Gastrocnemius medialis (tissue), 4 donors: ENCODE measurements at regions of chr12 and their contacts with region 1.

Region 1: GRCh38 chr12:46382964-46383653 is 10.5 kb upstream of the SLC38A2 start:
- DNase-seq: peak; percentile 96
- ATAC-seq: peak; percentile 77 to 80
- H3K4me3 ChIP-seq: peak overlapping the region; percentile 66 to 79 (median 74)
- H3K27ac ChIP-seq: peak overlapping the region; percentile 92 to 98 (median 96)
- H3K4me1 ChIP-seq: peaks cover 40 to 43% of the 10 kb centered on the region in 2 donors
- H3K27me3 ChIP-seq: no peaks in the 10 kb centered on the region
- CTCF ChIP-seq: peak in 3 of 5 experiments; percentile 23 to 53 (median 32)
- POLR2A ChIP-seq: peak; percentile 89 to 93

Region 2: GRCh38 chr12:45532113-45532512 is 851.0 kb before region 1 on chr12:
- in situ Hi-C with region 1: no loop called
- intact Hi-C with region 1: no loop called
- DNase-seq: no peak
- ATAC-seq: no peak
- H3K4me3 ChIP-seq: no peak overlapping the region
- H3K27ac ChIP-seq: no peak overlapping the region
- H3K4me1 ChIP-seq: no peaks in the 10 kb centered on the region
- H3K27me3 ChIP-seq: no peaks in the 10 kb centered on the region
- CTCF ChIP-seq: no peak
- POLR2A ChIP-seq: no peak

Region 3: DNA sequence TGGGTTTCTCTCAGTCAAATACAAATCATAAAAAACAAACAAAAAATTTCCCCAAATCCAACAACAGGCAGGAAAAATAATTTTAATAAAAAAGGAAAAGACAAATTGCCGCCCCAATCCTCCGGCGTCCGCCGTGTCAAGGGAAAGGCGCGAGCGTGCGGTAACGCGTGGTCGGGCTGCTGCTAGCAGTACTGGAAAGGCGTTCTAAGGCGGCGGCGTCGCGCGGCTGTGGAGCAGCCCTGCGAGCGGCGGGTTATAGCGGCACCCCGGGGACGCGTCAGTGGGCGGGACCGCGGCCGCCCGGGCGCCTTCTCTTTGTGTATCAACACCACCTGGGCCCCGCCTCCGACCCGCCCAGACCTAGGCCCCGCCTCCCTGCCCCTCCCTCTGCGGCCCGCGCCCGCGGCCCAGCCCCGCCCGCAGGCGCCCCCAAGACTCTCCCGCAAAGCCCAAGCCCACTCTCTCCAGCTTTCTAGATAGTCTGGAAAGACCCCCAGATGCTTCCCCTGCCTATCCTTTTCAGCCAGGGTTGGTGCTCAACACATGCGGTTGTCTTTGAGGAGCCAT is 10.5 kb before region 1 on chr12 and contains the start of gene SLC38A2:
- in situ Hi-C with region 1: no loop called
- intact Hi-C with region 1: loop called (anchors 1 kb)
- DNase-seq: peak; percentile 97 to 98
- ATAC-seq: peak; percentile 69 to 71
- H3K4me3 ChIP-seq: peak within 1 kb of the TSS; percentile 68 to 87 (median 80)
- H3K27ac ChIP-seq: peak within 1 kb of the TSS; percentile 93 to 97 (median 95)
- H3K4me1 ChIP-seq: peaks cover 38 to 46% of the 10 kb centered on the region in 2 donors
- H3K27me3 ChIP-seq: no peaks in the 10 kb centered on the region
- CTCF ChIP-seq: no peak
- POLR2A ChIP-seq: peak; percentile 100
- total RNA-seq, gene SLC38A2: 260 to 853 (median 400) TPM

Region 4: GRCh38 chr12:46430340-46430948 is 47.3 kb after region 1 on chr12:
- in situ Hi-C with region 1: no loop called
- intact Hi-C with region 1: loop called (anchors 1 kb)
- DNase-seq: no peak
- ATAC-seq: peak; percentile 83 to 95
- H3K4me3 ChIP-seq: no peak overlapping the region
- H3K27ac ChIP-seq: peak overlapping the region; percentile 3 to 65 (median 43)
- H3K4me1 ChIP-seq: peaks cover 14 to 30% of the 10 kb centered on the region in 2 donors
- H3K27me3 ChIP-seq: no peaks in the 10 kb centered on the region
- CTCF ChIP-seq: no peak
- POLR2A ChIP-seq: no peak

Region 5: DNA sequence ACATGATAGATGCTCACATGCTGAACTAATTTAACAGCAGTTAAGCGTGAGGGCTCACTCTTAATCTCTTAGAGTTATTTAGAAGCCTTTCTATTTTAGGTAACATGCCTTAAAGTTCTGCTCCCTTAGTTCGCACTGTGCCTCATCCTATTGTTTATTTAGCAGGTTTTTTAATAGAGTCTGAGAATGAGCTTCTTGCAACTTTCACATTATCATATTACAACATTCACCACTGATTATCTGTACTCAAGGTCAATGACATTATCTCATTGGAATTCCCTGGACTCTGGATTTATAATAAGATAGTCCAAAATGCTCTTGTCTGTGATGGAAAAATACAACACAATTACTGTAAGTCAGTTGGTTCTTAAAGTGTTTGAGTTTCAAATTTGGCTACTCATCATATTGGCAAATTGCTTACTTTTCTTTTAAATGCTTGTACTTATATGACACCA is 173.0 kb after region 1 on chr12:
- in situ Hi-C with region 1: loop called in 2 of 4 experiments (anchors 10 to 25 kb)
- intact Hi-C with region 1: no loop called
- DNase-seq: peak in 1 of 2 donors; percentile 40
- ATAC-seq: peak; percentile 43 to 89
- H3K4me3 ChIP-seq: peak overlapping the region in 1 of 4 donors; percentile 0
- H3K27ac ChIP-seq: peak overlapping the region; percentile 68 to 90 (median 80)
- H3K4me1 ChIP-seq: peaks cover 72 to 82% of the 10 kb centered on the region in 2 donors
- H3K27me3 ChIP-seq: no peaks in the 10 kb centered on the region
- CTCF ChIP-seq: no peak
- POLR2A ChIP-seq: peak in 1 of 2 donors; percentile 34

Region 6: GRCh38 chr12:46562625-46563228 is 179.6 kb after region 1 on chr12:
- in situ Hi-C with region 1: loop called in 2 of 4 experiments (anchors 10 to 25 kb)
- intact Hi-C with region 1: no loop called
- DNase-seq: no peak
- ATAC-seq: peak; percentile 62 to 67
- H3K4me3 ChIP-seq: peak overlapping the region in 2 of 4 donors; percentile 3 to 12
- H3K27ac ChIP-seq: peak overlapping the region; percentile 68 to 90 (median 80)
- H3K4me1 ChIP-seq: peaks cover 40 to 47% of the 10 kb centered on the region in 2 donors
- H3K27me3 ChIP-seq: no peaks in the 10 kb centered on the region
- CTCF ChIP-seq: no peak
- POLR2A ChIP-seq: no peak

Region 7: DNA sequence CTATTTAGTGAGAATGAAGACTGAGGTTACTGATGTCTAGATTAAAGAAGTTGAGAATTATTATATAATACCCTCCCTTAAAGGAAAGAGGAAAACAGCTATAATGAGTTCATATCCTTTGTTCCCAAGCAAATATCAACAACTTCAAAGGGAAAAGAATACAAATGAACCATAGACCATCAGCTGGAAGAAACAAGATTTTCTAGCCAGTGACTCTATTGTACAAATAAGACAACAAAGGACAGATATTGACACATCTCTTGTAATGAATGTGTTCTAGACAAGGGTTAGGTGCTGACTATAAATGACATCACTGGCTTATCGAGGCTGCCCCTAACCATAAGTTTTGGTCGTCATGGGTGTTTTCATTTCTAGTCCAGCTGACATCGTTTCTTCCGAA is 394.5 kb after region 1 on chr12:
- in situ Hi-C with region 1: no loop called
- intact Hi-C with region 1: loop called (anchors 5 kb)
- DNase-seq: no peak
- ATAC-seq: no peak
- H3K4me3 ChIP-seq: no peak overlapping the region
- H3K27ac ChIP-seq: peak overlapping the region; percentile 85 to 90 (median 88)
- H3K4me1 ChIP-seq: peaks cover 38 to 53% of the 10 kb centered on the region in 2 donors
- H3K27me3 ChIP-seq: no peaks in the 10 kb centered on the region
- CTCF ChIP-seq: no peak
- POLR2A ChIP-seq: no peak